CD8-positive, alpha-beta memory T cell (primary cell): ENCODE measurements at regions of chr1 and their contacts with region 1.

Region 1: GRCh38 chr1:204494281-204495077 is at the start of gene PIK3C2B:
- DNase-seq: peak; percentile 54 to 78 (median 69)
- H3K4me3 ChIP-seq: peak within 1 kb of the TSS; percentile 58
- H3K4me3 Mint-ChIP-seq: peak within 1 kb of the TSS; percentile 85 to 97 (median 94)
- H3K27ac ChIP-seq: peak within 1 kb of the TSS; percentile 77
- H3K27ac Mint-ChIP-seq: peak within 1 kb of the TSS; percentile 85 to 99 (median 96)
- H3K4me1 ChIP-seq: peaks cover 30% of the 10 kb centered on the region
- H3K4me1 Mint-ChIP-seq: peaks cover 40 to 57% (median 51%) of the 10 kb centered on the region in 3 donors
- H3K27me3 ChIP-seq: no peaks in the 10 kb centered on the region
- H3K27me3 Mint-ChIP-seq: peaks cover 0 to 2% of the 10 kb centered on the region in 2 donors
- total RNA-seq, gene PIK3C2B: 19.4 to 19.6 TPM

Region 2: DNA sequence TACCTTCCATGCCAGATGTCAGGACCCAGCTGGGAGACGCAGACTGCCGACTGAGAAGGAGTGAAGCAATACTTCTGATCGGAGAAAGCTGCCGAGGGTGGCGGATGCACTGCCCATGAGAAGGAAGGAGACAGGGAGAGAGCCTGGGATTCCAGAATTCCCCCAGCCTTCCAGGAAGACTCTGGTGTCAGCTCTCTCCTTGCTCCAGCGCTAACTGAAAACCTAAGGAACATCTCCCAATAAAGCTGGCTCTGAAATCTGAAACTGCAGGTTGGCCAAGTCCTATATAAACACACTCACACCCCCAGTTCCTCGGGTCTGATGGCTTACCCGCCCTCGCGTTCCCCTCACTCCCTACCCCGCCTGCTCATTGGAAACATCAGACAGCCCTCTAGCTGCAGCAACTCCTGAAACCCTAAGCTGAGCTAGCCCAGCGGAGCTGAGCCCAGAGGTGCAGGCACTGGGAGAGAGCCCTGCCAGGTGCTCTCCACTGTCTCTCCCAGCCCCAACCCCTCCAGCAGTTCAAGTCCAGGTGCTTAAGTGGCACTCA is 187.1 kb before region 1 on chr1:
- CTCF ChIA-PET with region 1: no interaction called
- POLR2A ChIA-PET with region 1: no interaction called
- DNase-seq: no peak
- H3K4me3 ChIP-seq: no peak overlapping the region
- H3K4me3 Mint-ChIP-seq: no peak overlapping the region
- H3K27ac ChIP-seq: no peak overlapping the region
- H3K27ac Mint-ChIP-seq: no peak overlapping the region
- H3K4me1 ChIP-seq: no peaks in the 10 kb centered on the region
- H3K4me1 Mint-ChIP-seq: no peaks in the 10 kb centered on the region
- H3K27me3 ChIP-seq: no peaks in the 10 kb centered on the region
- H3K27me3 Mint-ChIP-seq: peaks cover 18 to 44% of the 10 kb centered on the region in 2 donors

Region 3: DNA sequence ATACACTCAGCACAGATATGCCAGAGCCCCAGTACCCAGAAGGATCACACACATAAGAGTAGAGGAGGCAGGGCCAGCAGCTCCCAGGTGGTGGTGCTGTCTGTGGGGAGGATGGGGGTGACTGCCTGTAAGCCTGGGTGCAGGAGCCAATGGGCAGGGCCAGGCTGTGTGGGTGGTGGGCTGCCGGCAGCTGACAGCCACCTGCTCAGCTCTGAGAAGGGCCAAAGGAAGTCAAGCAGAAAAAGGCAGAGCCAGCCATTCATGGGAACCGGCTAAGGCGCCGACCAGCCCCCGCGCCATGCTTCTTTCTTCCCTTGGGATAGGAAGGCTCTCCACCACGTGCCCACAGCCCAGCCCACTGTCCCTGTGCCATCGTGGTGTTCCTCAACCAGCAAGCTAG is 14.0 kb before region 1 on chr1:
- CTCF ChIA-PET with region 1: interaction called, 12 read pairs
- POLR2A ChIA-PET with region 1: interaction called, 7 read pairs
- DNase-seq: no peak
- H3K4me3 ChIP-seq: no peak overlapping the region
- H3K4me3 Mint-ChIP-seq: peak overlapping the region in 3 of 7 donors; percentile 22 to 54 (median 24)
- H3K27ac ChIP-seq: no peak overlapping the region
- H3K27ac Mint-ChIP-seq: peak overlapping the region in 5 of 8 donors; percentile 29 to 63 (median 58)
- H3K4me1 ChIP-seq: peaks cover 34% of the 10 kb centered on the region
- H3K4me1 Mint-ChIP-seq: peaks cover 56 to 85% (median 84%) of the 10 kb centered on the region in 3 donors
- H3K27me3 ChIP-seq: no peaks in the 10 kb centered on the region
- H3K27me3 Mint-ChIP-seq: no peaks in the 10 kb centered on the region

Region 4: DNA sequence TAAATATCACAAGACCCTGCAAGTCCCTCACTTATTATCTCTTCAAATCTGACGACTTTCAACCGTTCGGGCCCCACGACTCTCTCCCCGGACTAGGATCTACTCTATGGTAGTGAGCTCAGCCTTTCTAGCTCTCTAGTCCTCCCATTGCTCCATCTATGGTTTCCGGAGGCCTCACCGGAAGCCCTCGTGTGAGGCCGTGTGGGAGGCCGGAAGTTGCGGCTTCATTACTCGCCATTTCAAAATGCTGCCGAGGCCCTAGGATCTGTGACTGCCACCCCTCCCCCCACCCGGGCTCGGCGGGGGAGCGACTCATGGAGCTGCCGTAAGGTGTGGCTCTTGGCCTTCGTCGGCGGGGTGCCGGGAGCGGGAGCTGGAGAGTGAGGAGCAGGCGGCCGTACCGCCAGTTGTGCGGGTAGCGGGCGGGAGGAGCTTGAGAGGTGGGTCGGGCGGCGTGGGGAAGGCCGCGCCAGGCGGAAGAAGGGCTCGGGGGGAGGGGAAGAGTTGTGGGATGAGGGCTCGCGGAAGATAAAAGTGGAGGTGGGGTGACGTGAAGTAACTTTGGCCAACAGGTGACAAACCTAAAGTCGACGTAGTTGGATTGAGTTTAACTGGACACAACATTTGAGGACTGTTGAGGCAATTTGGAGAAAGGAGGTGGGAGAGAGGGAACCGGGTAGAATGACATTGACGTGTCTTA is 21.9 kb after region 1 on chr1 and contains the start of gene MDM4:
- CTCF ChIA-PET with region 1: interaction called, 23 read pairs
- POLR2A ChIA-PET with region 1: interaction called, 14 read pairs
- DNase-seq: peak; percentile 85 to 96 (median 93)
- H3K4me3 ChIP-seq: peak within 1 kb of the TSS; percentile 81
- H3K4me3 Mint-ChIP-seq: peak within 1 kb of the TSS in 1 of 7 donors; percentile 29
- H3K27ac ChIP-seq: peak within 1 kb of the TSS; percentile 97
- H3K27ac Mint-ChIP-seq: peak within 1 kb of the TSS in 2 of 8 donors; percentile 77 to 99
- H3K4me1 ChIP-seq: peaks cover 83% of the 10 kb centered on the region
- H3K4me1 Mint-ChIP-seq: peaks cover 30 to 72% (median 60%) of the 10 kb centered on the region in 3 donors
- H3K27me3 ChIP-seq: no peaks in the 10 kb centered on the region
- H3K27me3 Mint-ChIP-seq: no peaks in the 10 kb centered on the region
- total RNA-seq, gene MDM4: 80.7 TPM